Right cardiac atrium (tissue), 5 donors: ENCODE measurements at regions of chr4 and their contacts with region 1.

Region 1: DNA sequence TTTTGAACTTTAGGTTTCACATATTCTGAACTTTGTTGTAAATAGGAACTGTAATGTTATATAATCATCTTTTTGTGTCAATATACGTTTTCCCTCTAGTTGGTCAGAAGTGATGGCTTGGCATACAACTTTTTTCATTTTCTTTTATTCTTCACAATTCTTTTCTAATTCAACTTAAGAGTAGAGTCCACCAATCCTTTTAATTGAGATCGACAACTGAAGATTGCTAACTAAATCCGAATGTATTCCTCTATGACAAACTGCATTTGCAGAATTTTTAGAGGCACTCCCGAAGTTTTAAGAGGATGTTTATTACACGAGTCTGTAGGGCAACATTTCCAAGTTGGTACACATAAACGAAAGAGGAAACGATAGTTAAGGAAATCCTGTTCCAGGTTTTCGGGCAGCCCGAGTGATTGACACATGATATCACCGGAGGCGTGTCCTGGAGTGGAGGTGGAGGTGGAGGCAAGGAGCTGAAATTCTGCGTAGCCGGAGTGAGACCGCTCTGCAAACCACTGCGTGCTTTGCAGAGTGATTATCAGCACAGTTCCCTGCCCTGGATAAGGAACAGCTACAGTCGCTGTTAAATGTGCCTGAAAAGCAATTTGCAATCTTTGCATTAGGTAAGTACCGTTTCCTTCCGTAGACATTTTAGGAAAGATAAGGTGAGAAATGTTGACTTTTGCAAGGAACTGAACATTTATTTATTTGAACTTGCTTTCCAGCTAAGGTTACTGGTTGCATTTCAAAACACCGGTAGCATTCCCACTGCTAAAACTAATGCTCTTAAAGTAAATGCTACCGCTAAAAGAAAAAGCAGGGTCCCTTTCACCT is at the start of gene SPRY1:
- DNase-seq: peak; percentile 88 to 94 (median 90)
- ATAC-seq: peak; percentile 90 to 94
- H3K4me3 ChIP-seq: peak within 1 kb of the TSS; percentile 63
- H3K27ac ChIP-seq: peak within 1 kb of the TSS; percentile 96
- H3K4me1 ChIP-seq: no peaks in the 10 kb centered on the region
- H3K27me3 ChIP-seq: no peaks in the 10 kb centered on the region
- total RNA-seq, gene SPRY1: 26.3 to 60.4 (median 50.0) TPM

Region 2: GRCh38 chr4:123133397-123134050 is 263.0 kb before region 1 on chr4:
- intact Hi-C with region 1: loop called in 1 of 4 experiments (anchors 10 kb)
- DNase-seq: no peak
- ATAC-seq: no peak
- H3K4me3 ChIP-seq: no peak overlapping the region
- H3K27ac ChIP-seq: no peak overlapping the region
- H3K4me1 ChIP-seq: no peaks in the 10 kb centered on the region
- H3K27me3 ChIP-seq: no peaks in the 10 kb centered on the region

Region 3: GRCh38 chr4:123168812-123169211 is 227.7 kb before region 1 on chr4:
- intact Hi-C with region 1: no loop called
- DNase-seq: no peak
- ATAC-seq: no peak
- H3K4me3 ChIP-seq: no peak overlapping the region
- H3K27ac ChIP-seq: no peak overlapping the region
- H3K4me1 ChIP-seq: no peaks in the 10 kb centered on the region
- H3K27me3 ChIP-seq: no peaks in the 10 kb centered on the region

Region 4: DNA sequence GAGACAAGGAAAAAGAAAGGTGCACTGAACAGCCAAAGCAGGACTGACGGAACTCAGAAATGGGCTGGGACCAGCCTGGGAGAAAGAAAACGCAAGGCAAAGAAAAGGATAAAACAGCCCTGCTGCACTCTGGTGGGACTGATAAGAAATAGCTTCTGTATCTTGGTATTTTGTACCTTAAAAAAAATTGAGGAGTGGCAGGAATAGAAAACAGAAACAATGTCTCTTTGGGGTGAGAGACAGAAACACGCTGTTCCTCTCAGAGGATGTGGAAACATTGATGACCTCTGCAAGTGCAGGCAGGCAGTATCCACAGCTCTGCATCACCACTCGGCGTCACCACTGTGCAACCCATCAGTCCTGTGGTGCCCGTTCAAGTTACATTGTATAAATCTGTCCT is 152.4 kb before region 1 on chr4:
- intact Hi-C with region 1: loop called in 1 of 4 experiments (anchors 10 kb)
- DNase-seq: peak; percentile 64 to 88 (median 69)
- ATAC-seq: peak; percentile 98 to 100
- H3K4me3 ChIP-seq: no peak overlapping the region
- H3K27ac ChIP-seq: no peak overlapping the region
- H3K4me1 ChIP-seq: peaks cover 1% of the 10 kb centered on the region
- H3K27me3 ChIP-seq: no peaks in the 10 kb centered on the region

Region 5: GRCh38 chr4:123444290-123444731 is 47.8 kb after region 1 on chr4:
- intact Hi-C with region 1: no loop called
- DNase-seq: peak; percentile 37 to 75 (median 61)
- ATAC-seq: peak; percentile 90
- H3K4me3 ChIP-seq: peak overlapping the region; percentile 16
- H3K27ac ChIP-seq: peak overlapping the region; percentile 1
- H3K4me1 ChIP-seq: no peaks in the 10 kb centered on the region
- H3K27me3 ChIP-seq: no peaks in the 10 kb centered on the region

Region 6: GRCh38 chr4:123495530-123495929 is 99.0 kb after region 1 on chr4:
- intact Hi-C with region 1: loop called in 2 of 4 experiments (anchors 10 kb)
- DNase-seq: no peak
- ATAC-seq: no peak
- H3K4me3 ChIP-seq: no peak overlapping the region
- H3K27ac ChIP-seq: no peak overlapping the region
- H3K4me1 ChIP-seq: no peaks in the 10 kb centered on the region
- H3K27me3 ChIP-seq: no peaks in the 10 kb centered on the region

Region 7: GRCh38 chr4:123505095-123506010 is 108.8 kb after region 1 on chr4:
- intact Hi-C with region 1: loop called in 1 of 4 experiments (anchors 10 kb)
- DNase-seq: peak; percentile 65 to 86 (median 84)
- ATAC-seq: peak; percentile 89 to 90
- H3K4me3 ChIP-seq: peak overlapping the region; percentile 66
- H3K27ac ChIP-seq: peak overlapping the region; percentile 37
- H3K4me1 ChIP-seq: no peaks in the 10 kb centered on the region
- H3K27me3 ChIP-seq: no peaks in the 10 kb centered on the region

Region 8: GRCh38 chr4:123649645-123650391 is 253.3 kb after region 1 on chr4:
- intact Hi-C with region 1: loop called in 2 of 4 experiments (anchors 10 kb)
- DNase-seq: peak; percentile 28 to 61 (median 61)
- ATAC-seq: peak; percentile 76 to 78
- H3K4me3 ChIP-seq: peak overlapping the region; percentile 45
- H3K27ac ChIP-seq: peak overlapping the region; percentile 88
- H3K4me1 ChIP-seq: peaks cover 4% of the 10 kb centered on the region
- H3K27me3 ChIP-seq: no peaks in the 10 kb centered on the region

Region 9: GRCh38 chr4:124111922-124112321 is 715.4 kb after region 1 on chr4:
- intact Hi-C with region 1: loop called in 3 of 4 experiments (anchors 10 kb)
- DNase-seq: no peak
- ATAC-seq: peak; percentile 84 to 86
- H3K4me3 ChIP-seq: no peak overlapping the region
- H3K27ac ChIP-seq: no peak overlapping the region
- H3K4me1 ChIP-seq: no peaks in the 10 kb centered on the region
- H3K27me3 ChIP-seq: no peaks in the 10 kb centered on the region